ENCODE measurements at regions of chr1 and their contacts with region 1.

Region 1: GRCh38 chr1:185388815-185389214 is 71.8 kb upstream of the IVNS1ABP start:
- DNase-seq: no peak
- H3K4me3 ChIP-seq: no peak overlapping the region
- H3K4me3 Mint-ChIP-seq: no peak overlapping the region
- H3K27ac Mint-ChIP-seq: no peak overlapping the region
- H3K4me1 ChIP-seq: peaks cover 5% of the 10 kb centered on the region; the same call in 1 of the 2 replicates
- H3K4me1 Mint-ChIP-seq: peaks cover 7% of the 10 kb centered on the region
- H3K27me3 ChIP-seq: no peaks in the 10 kb centered on the region
- H3K27me3 Mint-ChIP-seq: no peaks in the 10 kb centered on the region
- CTCF ChIP-seq: no peak

Region 2: GRCh38 chr1:185404291-185404690 is 15.5 kb after region 1 on chr1:
- CTCF ChIA-PET with region 1: no interaction called
- POLR2A ChIA-PET with region 1: no interaction called
- intact Hi-C with region 1: no loop called
- DNase-seq: no peak
- H3K4me3 ChIP-seq: no peak overlapping the region
- H3K4me3 Mint-ChIP-seq: peak overlapping the region; percentile 48
- H3K27ac Mint-ChIP-seq: no peak overlapping the region
- H3K4me1 ChIP-seq: peaks cover 6% of the 10 kb centered on the region; the same call in 1 of the 2 replicates
- H3K4me1 Mint-ChIP-seq: peaks cover 27% of the 10 kb centered on the region
- H3K27me3 ChIP-seq: no peaks in the 10 kb centered on the region
- H3K27me3 Mint-ChIP-seq: no peaks in the 10 kb centered on the region
- CTCF ChIP-seq: no peak

Region 3: DNA sequence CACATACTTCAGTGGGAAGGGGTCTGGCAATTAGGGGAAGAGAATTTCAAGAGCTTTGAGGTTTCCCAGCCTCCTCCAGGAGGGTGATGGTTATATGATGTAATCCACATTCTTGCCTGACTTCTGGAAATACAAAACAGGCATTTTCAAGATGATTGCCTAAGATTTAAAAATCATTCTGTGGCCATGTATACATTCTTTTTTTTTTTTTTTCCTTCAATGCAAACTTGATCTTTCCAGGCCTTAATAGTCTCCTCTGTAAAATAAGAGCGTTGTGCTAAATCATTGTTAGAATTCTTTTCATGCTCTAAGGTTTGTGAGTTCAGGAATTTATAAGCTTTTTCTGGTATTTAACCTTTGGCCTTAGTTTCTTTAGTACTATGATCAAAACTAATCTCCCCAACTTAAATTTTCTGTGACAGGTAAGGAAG is 153.1 kb after region 1 on chr1:
- CTCF ChIA-PET with region 1: no interaction called
- POLR2A ChIA-PET with region 1: no interaction called
- intact Hi-C with region 1: loop called (anchors 5 kb)
- DNase-seq: peak in 1 of 2 experiments; percentile 40
- H3K4me3 ChIP-seq: no peak overlapping the region
- H3K4me3 Mint-ChIP-seq: peak overlapping the region; percentile 44
- H3K27ac Mint-ChIP-seq: peak overlapping the region; percentile 83
- H3K4me1 ChIP-seq: peaks cover 41% of the 10 kb centered on the region
- H3K4me1 Mint-ChIP-seq: peaks cover 39% of the 10 kb centered on the region
- H3K27me3 ChIP-seq: no peaks in the 10 kb centered on the region
- H3K27me3 Mint-ChIP-seq: no peaks in the 10 kb centered on the region
- CTCF ChIP-seq: no peak